IMR-90 (cell line): ENCODE measurements at regions of chr10 and their contacts with region 1.

Region 1: DNA sequence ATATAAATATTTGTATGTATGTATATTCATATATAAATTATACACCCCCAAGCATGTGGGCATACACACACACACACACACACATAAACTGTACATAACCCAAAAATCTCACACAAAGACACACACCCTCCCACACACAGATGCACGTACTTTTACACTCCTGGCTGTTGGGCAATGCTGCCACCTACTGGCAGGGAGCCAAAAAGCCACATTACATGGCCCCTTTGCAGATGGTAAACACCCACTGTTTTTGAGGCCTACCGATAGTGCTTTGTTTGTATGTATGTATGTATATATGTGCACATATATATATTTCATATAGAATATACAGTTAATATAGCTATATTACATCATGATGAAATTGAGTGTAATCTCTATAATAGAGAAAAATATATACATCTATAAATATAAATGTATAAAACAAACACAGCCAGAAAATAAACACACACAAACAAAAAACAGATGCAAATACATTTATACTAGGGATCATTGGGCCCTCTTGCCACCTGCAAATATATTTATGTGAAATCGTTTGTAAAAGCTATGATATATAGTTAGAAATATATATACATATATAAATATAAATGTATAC is 120.1 kb upstream of the ACBD5 start:
- DNase-seq: peak; percentile 58
- ATAC-seq: peak; percentile 91
- H3K4me3 ChIP-seq: no peak overlapping the region
- H3K27ac ChIP-seq: no peak overlapping the region
- H3K4me1 ChIP-seq: no peaks in the 10 kb centered on the region
- H3K27me3 ChIP-seq: no peaks in the 10 kb centered on the region; the same call in none of the 2 replicates
- CTCF ChIP-seq: peak; percentile 68
- POLR2A ChIP-seq: no peak
- RAD21 ChIP-seq: peak; percentile 80

Region 2: DNA sequence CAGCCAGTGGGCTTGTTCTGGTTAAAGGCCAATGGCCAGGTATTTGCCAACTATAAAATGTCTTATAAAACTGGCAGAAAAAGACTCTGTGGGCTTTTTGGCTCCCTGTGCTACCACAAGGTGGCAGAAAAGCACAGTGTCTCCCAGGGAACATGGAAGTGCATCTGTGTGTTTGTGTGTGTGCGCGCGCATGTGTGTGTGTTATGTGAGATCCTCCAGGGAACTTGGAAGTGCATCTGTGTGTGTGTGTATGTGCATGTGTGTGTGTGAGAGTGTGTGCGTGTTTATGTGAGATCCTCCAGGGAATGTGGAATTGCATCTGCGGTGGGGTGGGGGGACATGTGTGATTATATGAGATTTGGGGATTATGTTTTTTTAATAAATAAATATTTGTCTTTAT is 469.7 kb before region 1 on chr10:
- CTCF ChIA-PET with region 1: no interaction called
- POLR2A ChIA-PET with region 1: no interaction called
- dilution Hi-C with region 1: no loop called
- in situ Hi-C with region 1: loop called (anchors 5 kb)
- intact Hi-C with region 1: loop called (anchors 2 kb)
- DNase-seq: peak; percentile 66
- ATAC-seq: peak; percentile 75
- H3K4me3 ChIP-seq: no peak overlapping the region
- H3K27ac ChIP-seq: no peak overlapping the region
- H3K4me1 ChIP-seq: no peaks in the 10 kb centered on the region
- H3K27me3 ChIP-seq: peaks cover 2% of the 10 kb centered on the region; the same call in 1 of the 2 replicates
- CTCF ChIP-seq: peak; percentile 56
- POLR2A ChIP-seq: no peak
- RAD21 ChIP-seq: peak; percentile 52

Region 3: DNA sequence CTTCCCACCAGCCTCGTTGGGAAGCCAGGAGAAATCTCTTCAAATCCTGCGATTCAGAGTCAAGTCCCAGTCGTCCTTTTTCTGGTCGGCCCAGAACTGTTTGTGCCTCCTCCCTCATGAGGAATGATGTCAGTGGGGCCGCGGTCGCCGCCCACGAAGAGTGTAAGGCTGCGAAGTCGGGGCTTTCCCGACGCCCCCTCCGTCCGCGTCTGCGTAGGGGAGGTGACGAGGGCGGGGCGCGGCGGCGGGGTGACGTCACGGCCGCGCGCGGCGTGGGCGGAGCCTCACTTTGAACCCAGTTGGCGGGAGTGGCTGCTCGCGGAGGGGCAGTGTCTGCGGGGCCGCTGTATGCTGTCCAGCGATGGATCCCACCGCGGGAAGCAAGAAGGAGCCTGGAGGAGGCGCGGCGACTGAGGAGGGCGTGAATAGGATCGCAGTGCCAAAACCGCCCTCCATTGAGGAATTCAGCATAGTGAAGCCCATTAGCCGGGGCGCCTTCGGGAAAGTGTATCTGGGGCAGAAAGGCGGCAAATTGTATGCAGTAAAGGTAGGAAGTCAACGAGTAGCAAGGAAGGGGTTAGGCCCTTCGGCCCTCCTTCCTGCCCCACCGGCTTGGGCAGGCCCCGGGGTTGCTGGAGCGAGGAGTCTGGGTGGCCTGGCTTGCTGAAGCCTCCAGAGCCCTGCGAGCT is 205.5 kb before region 1 on chr10 and contains the start of gene MASTL:
- CTCF ChIA-PET with region 1: no interaction called
- POLR2A ChIA-PET with region 1: no interaction called
- dilution Hi-C with region 1: no loop called
- in situ Hi-C with region 1: no loop called
- intact Hi-C with region 1: loop called (anchors 10 kb)
- DNase-seq: peak; percentile 95
- ATAC-seq: peak; percentile 89
- H3K4me3 ChIP-seq: peak within 1 kb of the TSS; percentile 87
- H3K27ac ChIP-seq: peak within 1 kb of the TSS; percentile 90
- H3K4me1 ChIP-seq: 0 out of 2 replicates have a peak, but pooled peaks cover 1% of the 10 kb centered on the region
- H3K27me3 ChIP-seq: no peaks in the 10 kb centered on the region
- CTCF ChIP-seq: no peak
- POLR2A ChIP-seq: peak; percentile 96
- RAD21 ChIP-seq: no peak
- total RNA-seq, gene MASTL: 13.4 and 18.1 TPM in 2 replicates

Region 4: GRCh38 chr10:27207350-27207749 is 153.3 kb before region 1 on chr10:
- CTCF ChIA-PET with region 1: no interaction called
- POLR2A ChIA-PET with region 1: no interaction called
- dilution Hi-C with region 1: no loop called
- in situ Hi-C with region 1: no loop called
- intact Hi-C with region 1: no loop called
- DNase-seq: peak; percentile 72
- ATAC-seq: peak; percentile 72
- H3K4me3 ChIP-seq: no peak overlapping the region
- H3K27ac ChIP-seq: no peak overlapping the region
- H3K4me1 ChIP-seq: 0 out of 2 replicates have a peak, but pooled peaks cover 2% of the 10 kb centered on the region
- H3K27me3 ChIP-seq: no peaks in the 10 kb centered on the region
- CTCF ChIP-seq: no peak
- POLR2A ChIP-seq: no peak
- RAD21 ChIP-seq: no peak

Region 5: GRCh38 chr10:27661514-27662286 is 301.0 kb after region 1 on chr10:
- CTCF ChIA-PET with region 1: no interaction called
- POLR2A ChIA-PET with region 1: no interaction called
- dilution Hi-C with region 1: no loop called
- in situ Hi-C with region 1: no loop called
- intact Hi-C with region 1: loop called (anchors 10 kb)
- DNase-seq: no peak
- ATAC-seq: no peak
- H3K4me3 ChIP-seq: no peak overlapping the region
- H3K27ac ChIP-seq: no peak overlapping the region
- H3K4me1 ChIP-seq: peaks cover 2% of the 10 kb centered on the region; the same call in 1 of the 2 replicates
- H3K27me3 ChIP-seq: peaks cover 2% of the 10 kb centered on the region; the same call in 1 of the 2 replicates
- CTCF ChIP-seq: no peak
- POLR2A ChIP-seq: no peak
- RAD21 ChIP-seq: no peak